ENCODE measurements at regions of chr2 and their contacts with region 1.

Region 1: DNA sequence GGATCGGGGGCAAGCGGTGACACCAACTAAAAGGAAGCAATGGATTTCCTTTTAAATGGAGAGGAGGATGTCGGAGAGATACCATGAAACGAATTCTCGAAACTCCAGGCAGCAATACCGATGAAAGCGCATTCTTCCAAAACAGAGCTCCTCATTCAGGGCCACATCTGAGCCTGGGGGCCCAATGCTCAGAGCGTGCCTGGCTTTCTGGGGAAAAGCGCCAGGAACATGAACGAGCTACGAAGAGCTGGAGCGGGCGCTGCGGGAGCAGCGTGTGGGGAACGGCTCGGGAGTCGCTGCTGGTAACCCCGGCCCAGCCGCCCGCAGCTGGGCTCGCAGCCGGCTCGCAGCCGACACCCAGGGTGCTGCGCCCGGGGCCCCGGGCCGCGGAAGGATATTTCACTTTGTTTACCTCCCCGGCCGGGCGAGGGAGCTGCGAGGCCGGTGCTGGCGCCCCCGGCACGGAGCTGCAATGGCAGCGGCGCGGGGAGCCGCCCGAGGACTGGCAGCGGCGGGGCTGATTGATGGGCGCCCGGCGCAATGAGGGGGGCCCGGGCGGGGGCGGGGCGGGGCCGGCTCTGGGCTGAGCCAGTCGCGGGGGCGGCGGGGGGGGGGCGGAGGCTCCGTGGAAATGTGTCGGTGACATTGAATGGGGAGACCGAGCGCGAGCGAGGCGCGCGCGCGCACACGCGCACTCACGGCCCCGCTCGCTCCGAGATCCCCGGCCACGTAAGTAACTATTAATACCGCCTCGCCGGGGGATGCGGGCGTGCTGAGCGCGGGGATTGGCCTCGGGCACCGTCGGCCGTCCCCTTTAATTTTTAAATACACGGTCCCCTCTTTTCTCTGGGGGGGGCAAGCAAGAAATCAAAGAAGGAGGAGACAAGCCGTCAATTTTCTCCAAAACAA is at the start of gene TRIB2:
- DNase-seq: peak; percentile 82
- H3K4me3 Mint-ChIP-seq: peak within 1 kb of the TSS; percentile 91
- H3K27ac Mint-ChIP-seq: peak within 1 kb of the TSS; percentile 91
- H3K4me1 Mint-ChIP-seq: peaks cover 58% of the 10 kb centered on the region
- H3K27me3 Mint-ChIP-seq: peaks cover 10% of the 10 kb centered on the region
- total RNA-seq, gene TRIB2: 6.3 TPM in 2 replicates

Region 2: GRCh38 chr2:11688222-11689069 is 1028.1 kb before region 1 on chr2:
- intact Hi-C with region 1: loop called (anchors 5 kb)
- DNase-seq: peak; percentile 78
- H3K4me3 Mint-ChIP-seq: peak overlapping the region; percentile 37
- H3K27ac Mint-ChIP-seq: no peak overlapping the region
- H3K4me1 Mint-ChIP-seq: peaks cover 10% of the 10 kb centered on the region
- H3K27me3 Mint-ChIP-seq: peaks cover 26% of the 10 kb centered on the region

Region 3: GRCh38 chr2:12005886-12006681 is 710.5 kb before region 1 on chr2:
- intact Hi-C with region 1: loop called (anchors 2 kb)
- DNase-seq: peak; percentile 45
- H3K4me3 Mint-ChIP-seq: no peak overlapping the region
- H3K27ac Mint-ChIP-seq: no peak overlapping the region
- H3K4me1 Mint-ChIP-seq: peaks cover 7% of the 10 kb centered on the region
- H3K27me3 Mint-ChIP-seq: peaks cover 58% of the 10 kb centered on the region

Region 4: GRCh38 chr2:12293874-12294273 is 422.7 kb before region 1 on chr2:
- intact Hi-C with region 1: loop called (anchors 2 kb)
- DNase-seq: peak; percentile 27
- H3K4me3 Mint-ChIP-seq: peak overlapping the region; percentile 35
- H3K27ac Mint-ChIP-seq: peak overlapping the region; percentile 69
- H3K4me1 Mint-ChIP-seq: peaks cover 49% of the 10 kb centered on the region
- H3K27me3 Mint-ChIP-seq: peaks cover 3% of the 10 kb centered on the region

Region 5: DNA sequence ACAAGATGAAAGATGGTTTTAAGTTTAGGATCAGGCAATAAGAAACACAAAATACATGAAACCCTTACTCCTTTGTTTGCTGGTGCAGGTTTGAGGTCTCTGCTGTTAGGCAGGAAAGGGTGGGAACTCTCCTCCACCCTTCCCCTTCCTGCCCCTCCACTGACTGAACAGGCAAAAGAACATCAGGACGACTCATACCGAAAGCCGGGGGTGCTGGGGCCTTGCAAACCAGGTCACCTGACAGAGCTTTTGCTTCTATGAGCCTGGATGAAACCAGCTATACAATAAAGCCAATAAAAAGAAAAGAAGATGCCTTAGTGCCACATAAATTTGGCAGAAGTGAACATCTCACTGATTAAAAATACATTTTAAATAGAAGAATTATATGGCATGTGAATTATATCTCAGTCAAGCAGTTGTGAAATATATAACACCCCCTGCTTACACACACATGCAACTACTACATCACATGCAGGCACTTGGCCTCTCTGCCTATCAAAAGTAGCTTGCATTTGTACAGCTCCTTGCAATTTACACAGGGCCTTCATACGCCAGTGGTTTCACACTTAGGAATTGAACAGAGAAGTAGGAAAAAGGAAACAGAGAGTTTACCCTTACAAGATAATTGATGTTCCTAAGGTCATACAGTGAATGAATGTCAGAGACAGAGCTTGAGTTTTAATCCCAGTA is 214.9 kb before region 1 on chr2:
- intact Hi-C with region 1: loop called (anchors 1 kb)
- DNase-seq: peak; percentile 79
- H3K4me3 Mint-ChIP-seq: peak overlapping the region; percentile 34
- H3K27ac Mint-ChIP-seq: peak overlapping the region; percentile 89
- H3K4me1 Mint-ChIP-seq: peaks cover 92% of the 10 kb centered on the region
- H3K27me3 Mint-ChIP-seq: no peaks in the 10 kb centered on the region

Region 6: GRCh38 chr2:12728221-12728777 is 11.8 kb after region 1 on chr2:
- intact Hi-C with region 1: loop called (anchors 1 kb)
- DNase-seq: peak; percentile 62
- H3K4me3 Mint-ChIP-seq: peak overlapping the region; percentile 65
- H3K27ac Mint-ChIP-seq: peak overlapping the region; percentile 61
- H3K4me1 Mint-ChIP-seq: peaks cover 61% of the 10 kb centered on the region
- H3K27me3 Mint-ChIP-seq: peaks cover 2% of the 10 kb centered on the region